ENCODE measurements at regions of chr1 and their contacts with region 1.

Region 1: GRCh38 chr1:16266411-16267118 is 29.6 kb upstream of the CPLANE2 start:
- DNase-seq: no peak
- H3K4me3 ChIP-seq: no peak overlapping the region
- H3K27ac ChIP-seq: no peak overlapping the region
- H3K4me1 ChIP-seq: no peaks in the 10 kb centered on the region
- H3K27me3 ChIP-seq: no peaks in the 10 kb centered on the region
- CTCF ChIP-seq: no peak

Region 2: GRCh38 chr1:16286122-16286521 is 19.6 kb after region 1 on chr1:
- CTCF ChIA-PET with region 1: no interaction called
- POLR2A ChIA-PET with region 1: interaction called, 10 read pairs
- intact Hi-C with region 1: no loop called
- DNase-seq: no peak
- H3K4me3 ChIP-seq: no peak overlapping the region
- H3K27ac ChIP-seq: no peak overlapping the region
- H3K4me1 ChIP-seq: no peaks in the 10 kb centered on the region
- H3K27me3 ChIP-seq: no peaks in the 10 kb centered on the region
- CTCF ChIP-seq: no peak

Region 3: DNA sequence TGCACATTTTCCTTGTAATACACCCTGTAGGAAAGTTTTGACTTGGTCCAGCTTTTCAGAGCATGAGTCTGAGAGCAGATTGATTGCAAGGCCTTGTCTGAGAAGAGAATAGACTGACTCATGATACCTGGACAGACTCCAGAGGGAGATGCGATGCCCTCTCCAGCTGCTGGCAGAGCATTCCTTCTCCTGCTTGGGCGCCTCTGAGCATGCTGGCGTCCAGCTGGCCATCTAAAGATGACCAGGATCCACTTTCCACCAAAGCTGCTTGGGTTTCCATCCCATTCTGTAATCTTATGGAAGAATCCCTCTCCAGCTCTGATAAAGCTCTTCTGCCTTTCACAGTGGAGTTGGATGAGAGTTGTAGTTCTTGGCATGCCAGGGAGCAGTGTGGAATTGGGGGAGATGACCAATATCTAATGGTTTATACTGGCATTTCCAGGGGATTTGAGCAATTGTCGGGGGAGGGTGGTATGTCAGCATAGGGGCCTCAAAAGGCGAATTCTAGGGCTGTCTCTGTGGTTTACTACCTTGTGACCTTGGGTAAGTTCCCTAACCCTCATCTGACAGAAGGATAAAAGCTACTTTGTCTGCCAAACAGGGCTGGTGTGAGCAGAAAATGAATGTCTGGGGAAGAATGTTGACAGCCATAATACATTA is 120.0 kb after region 1 on chr1:
- CTCF ChIA-PET with region 1: no interaction called
- POLR2A ChIA-PET with region 1: interaction called, 25 read pairs
- intact Hi-C with region 1: no loop called
- DNase-seq: peak in 1 of 2 experiments; percentile 32
- H3K4me3 ChIP-seq: no peak overlapping the region
- H3K27ac ChIP-seq: no peak overlapping the region
- H3K4me1 ChIP-seq: no peaks in the 10 kb centered on the region; the same call in 1 of the 2 replicates
- H3K27me3 ChIP-seq: no peaks in the 10 kb centered on the region
- CTCF ChIP-seq: no peak